Heart right ventricle (tissue), 16 donors: ENCODE measurements at regions of chr22 and their contacts with region 1.

Region 1: DNA sequence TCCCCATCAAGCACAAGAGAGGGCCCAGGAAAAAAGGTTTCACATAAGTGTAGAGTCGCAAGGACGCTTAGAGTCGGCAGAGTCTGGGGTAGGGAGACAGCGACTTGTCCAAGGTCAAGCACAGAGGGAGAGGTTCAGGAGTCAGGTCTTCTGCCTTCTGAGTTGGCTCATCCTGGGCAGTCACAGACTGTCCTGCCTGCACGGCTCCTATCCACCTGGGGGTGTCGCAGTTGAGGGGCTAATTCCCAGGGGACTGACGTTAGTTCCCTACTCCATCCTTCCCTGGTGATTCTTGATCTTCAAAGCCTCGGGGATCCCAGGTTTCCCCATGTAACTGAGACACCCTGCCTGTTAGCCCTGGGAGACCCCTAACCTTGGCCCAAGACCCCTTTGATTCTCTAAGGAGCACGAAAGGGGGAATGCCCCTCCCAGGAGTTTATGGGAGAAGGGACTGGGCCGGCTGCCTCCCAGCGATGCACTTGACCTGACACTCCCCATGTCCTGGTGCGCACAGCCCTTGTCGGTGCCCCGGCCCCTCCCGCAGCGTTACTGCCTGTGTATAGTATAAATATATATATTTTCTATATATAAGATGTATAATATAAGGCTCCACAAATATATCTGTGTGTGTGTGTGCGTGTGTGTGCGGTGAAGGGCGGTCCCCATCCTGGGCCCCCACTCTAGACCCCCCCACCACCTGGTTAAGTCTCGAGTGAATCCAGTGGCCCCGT is 14.7 kb upstream of the TAB1 start:
- DNase-seq: no peak
- ATAC-seq: peak in 2 of 8 donors; percentile 37 to 43
- H3K4me3 ChIP-seq: no peak overlapping the region
- H3K27ac ChIP-seq: no peak overlapping the region
- H3K4me1 ChIP-seq: peaks cover 0 to 19% (median 9%) of the 10 kb centered on the region in 9 donors
- H3K27me3 ChIP-seq: peaks cover 0 to 6% (median 0%) of the 10 kb centered on the region in 7 donors
- CTCF ChIP-seq: peak in 7 of 9 donors; percentile 16 to 42 (median 37)

Region 2: DNA sequence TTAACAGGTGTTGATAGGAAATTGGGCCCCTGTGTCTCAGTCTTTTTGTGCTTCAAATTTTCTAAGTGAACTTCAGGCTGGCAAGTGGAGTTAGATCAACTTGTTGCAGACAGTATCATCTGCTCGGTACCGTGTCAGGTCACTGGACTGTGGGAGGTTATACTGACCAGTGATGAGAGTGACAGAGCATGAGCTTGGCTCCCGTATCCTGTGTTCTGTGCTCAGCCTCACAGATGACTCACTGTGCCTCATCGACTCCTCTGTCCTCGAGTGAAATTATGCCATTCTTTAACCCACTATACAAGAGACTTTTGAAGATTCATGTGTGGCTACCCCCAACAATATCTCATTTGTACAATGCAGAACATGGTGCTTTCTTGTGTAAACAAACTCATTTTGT is 523.8 kb after region 1 on chr22:
- intact Hi-C with region 1: loop called in 1 of 10 experiments (anchors 5 kb)
- DNase-seq: no peak
- ATAC-seq: no peak
- H3K4me3 ChIP-seq: no peak overlapping the region
- H3K27ac ChIP-seq: no peak overlapping the region
- H3K4me1 ChIP-seq: no peaks in the 10 kb centered on the region
- H3K27me3 ChIP-seq: peaks cover 0 to 67% (median 46%) of the 10 kb centered on the region in 7 donors
- CTCF ChIP-seq: no peak